ENCODE measurements at regions of chr4 and their contacts with region 1.

Region 1: DNA sequence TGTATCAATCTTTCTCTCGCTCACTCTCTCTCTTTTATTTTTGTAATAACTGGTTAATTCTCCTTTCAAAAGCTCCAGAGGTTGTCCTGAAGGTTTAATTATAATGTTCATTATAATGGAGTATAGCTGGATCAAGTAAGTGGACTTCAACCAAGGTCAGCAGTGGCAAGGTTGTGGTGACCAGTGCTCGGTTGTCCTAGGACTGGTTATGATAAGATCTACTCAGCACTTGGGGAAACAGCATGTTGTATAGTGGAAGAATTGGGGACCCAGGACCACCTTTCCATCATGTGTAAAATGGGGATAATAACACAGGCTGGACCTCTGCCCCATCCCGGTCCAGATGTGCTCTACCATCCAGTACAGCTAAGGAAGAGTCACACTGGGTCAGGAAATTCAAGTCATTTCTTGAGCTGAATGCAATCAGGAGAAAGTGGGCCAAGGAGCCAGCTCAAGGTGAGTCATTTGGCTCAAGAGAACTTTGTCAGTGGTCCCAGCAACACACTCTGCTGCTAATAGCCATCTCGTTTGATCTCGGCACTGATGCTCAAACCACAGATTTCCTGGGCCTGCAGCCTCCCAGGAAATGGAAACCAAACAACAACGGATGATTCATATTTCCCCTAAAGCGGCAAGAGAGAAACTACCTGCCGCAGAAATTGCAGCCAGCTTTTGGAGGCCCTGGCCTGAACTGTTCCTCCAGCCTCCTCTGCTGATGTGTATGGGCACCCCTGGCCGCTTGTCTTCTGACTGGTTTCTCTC is 123.6 kb upstream of the RBPJ start:
- DNase-seq: peak; percentile 86
- ATAC-seq: peak; percentile 88
- H3K4me3 Mint-ChIP-seq: peak overlapping the region; percentile 38
- H3K27ac Mint-ChIP-seq: peak overlapping the region; percentile 89
- H3K4me1 Mint-ChIP-seq: peaks cover 63% of the 10 kb centered on the region
- H3K27me3 Mint-ChIP-seq: no peaks in the 10 kb centered on the region
- CTCF ChIP-seq: no peak

Region 2: GRCh38 chr4:26217961-26218676 is 20.9 kb after region 1 on chr4:
- CTCF ChIA-PET with region 1: no interaction called
- POLR2A ChIA-PET with region 1: no interaction called
- intact Hi-C with region 1: no loop called
- DNase-seq: no peak
- ATAC-seq: no peak
- H3K4me3 Mint-ChIP-seq: no peak overlapping the region
- H3K27ac Mint-ChIP-seq: no peak overlapping the region
- H3K4me1 Mint-ChIP-seq: peaks cover 6% of the 10 kb centered on the region
- H3K27me3 Mint-ChIP-seq: peaks cover 8% of the 10 kb centered on the region
- CTCF ChIP-seq: no peak

Region 3: DNA sequence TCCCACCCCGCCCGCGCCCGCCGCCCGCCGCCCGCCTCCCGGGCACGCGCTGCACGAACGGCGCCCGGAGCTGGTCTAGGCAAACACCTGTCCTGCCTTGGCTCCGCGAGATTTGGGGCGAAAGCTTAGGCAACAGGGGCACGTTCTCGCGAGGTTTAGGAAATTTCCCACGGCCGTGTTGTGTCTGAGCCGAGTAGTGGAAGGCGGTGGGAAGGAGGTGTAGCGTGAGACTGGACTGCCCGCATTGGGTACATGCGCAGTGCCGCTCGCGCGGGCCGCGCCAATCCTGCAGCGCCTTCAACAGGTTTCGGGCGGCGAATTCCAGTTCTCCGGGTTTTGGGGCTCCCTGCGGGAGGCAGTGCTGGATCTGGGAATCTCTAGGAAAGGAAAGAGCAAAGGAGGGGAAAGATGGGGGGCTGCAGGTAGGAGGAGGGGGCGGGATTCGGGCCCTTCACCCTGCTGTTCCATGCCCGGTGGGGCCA is 122.3 kb after region 1 on chr4:
- CTCF ChIA-PET with region 1: interaction called, 3 read pairs
- POLR2A ChIA-PET with region 1: interaction called, 11 read pairs
- intact Hi-C with region 1: loop called (anchors 2 kb)
- DNase-seq: peak; percentile 99
- ATAC-seq: peak; percentile 67
- H3K4me3 Mint-ChIP-seq: peak overlapping the region; percentile 92
- H3K27ac Mint-ChIP-seq: peak overlapping the region; percentile 100
- H3K4me1 Mint-ChIP-seq: peaks cover 34% of the 10 kb centered on the region
- H3K27me3 Mint-ChIP-seq: no peaks in the 10 kb centered on the region
- CTCF ChIP-seq: no peak